Ascending aorta (tissue), 2 donors: ENCODE measurements at regions of chr11 and their contacts with region 1.

Region 1: GRCh38 chr11:100687630-100688395 is 725 bp downstream of the ARHGAP42 start:
- DNase-seq: peak in 1 of 2 donors; percentile 65
- H3K4me3 ChIP-seq: peak overlapping the region; percentile 64 to 95
- H3K27ac ChIP-seq: peak overlapping the region; percentile 72 to 74
- H3K4me1 ChIP-seq: peaks cover 0 to 7% of the 10 kb centered on the region in 2 donors
- H3K27me3 ChIP-seq: no peaks in the 10 kb centered on the region
- CTCF ChIP-seq: peak; percentile 17 to 63 (median 55)

Region 2: DNA sequence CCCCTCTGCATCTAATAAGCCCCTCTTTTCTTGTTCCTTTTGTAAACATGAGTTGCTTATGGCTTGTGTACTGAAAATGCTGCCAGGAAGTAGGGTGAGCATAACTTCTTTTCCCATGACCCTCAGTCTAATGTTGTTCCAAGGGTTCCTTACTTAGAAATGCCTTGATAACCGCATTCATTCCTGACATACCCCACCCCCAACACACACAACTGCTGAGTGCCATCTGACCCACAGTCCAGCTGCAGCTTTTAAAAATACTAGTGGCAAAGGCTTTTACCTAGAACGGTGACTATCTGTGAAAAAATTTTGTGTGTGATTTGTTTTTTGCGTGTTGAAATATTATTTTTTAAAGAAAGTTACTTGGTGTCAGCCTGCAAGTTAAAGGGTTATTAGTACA is 51.9 kb after region 1 on chr11:
- intact Hi-C with region 1: loop called (anchors 5 kb)
- DNase-seq: no peak
- H3K4me3 ChIP-seq: no peak overlapping the region
- H3K27ac ChIP-seq: no peak overlapping the region
- H3K4me1 ChIP-seq: peaks cover 0 to 11% of the 10 kb centered on the region in 2 donors
- H3K27me3 ChIP-seq: no peaks in the 10 kb centered on the region
- CTCF ChIP-seq: no peak